Ascending aorta (tissue), 2 donors: ENCODE measurements at regions of chr3 and their contacts with region 1.

Region 1: DNA sequence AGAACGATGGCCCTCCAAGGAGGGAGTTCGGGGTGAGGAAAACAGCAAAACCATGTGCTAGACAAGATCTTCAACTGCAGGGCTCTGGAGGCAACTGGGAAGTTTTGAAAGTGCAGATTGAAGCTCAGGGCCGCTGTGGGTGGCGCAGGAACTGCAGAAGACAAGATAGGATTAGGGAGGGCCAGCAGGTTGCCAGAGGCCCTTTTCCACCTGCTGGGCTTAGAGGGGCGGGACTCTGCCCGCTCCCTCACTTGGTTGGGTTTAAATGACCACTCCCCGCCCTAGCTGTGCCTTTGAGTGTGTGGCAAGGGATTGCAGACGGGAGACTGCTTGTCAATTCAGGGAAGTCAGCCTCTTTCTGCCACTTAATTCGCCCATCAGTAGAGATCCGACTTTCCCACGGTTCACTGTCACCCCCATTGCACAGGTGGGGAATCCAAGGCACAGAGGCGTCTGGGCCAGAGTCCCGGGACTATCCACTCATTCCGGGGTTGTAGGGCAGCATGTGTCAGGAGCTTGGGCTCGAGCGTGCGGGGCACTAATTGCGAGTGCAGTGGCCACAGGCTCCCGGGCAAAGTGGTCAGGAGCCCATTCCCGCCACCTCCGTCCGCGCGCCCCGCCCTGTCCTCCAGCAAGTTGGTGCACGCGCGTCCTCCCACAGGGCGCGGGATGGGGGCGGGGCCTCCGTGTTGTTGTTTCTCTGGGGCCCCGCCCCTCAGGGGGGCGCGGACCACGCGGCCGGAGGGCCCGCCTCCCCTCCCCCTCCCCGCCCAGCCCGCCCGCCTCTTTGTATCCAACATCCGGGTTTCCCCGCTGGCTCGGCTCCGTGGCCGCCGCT is at the start of gene ACVR2B:
- DNase-seq: peak; percentile 46 to 92
- H3K4me3 ChIP-seq: peak within 1 kb of the TSS; percentile 88 to 99
- H3K27ac ChIP-seq: peak within 1 kb of the TSS; percentile 45 to 61
- H3K4me1 ChIP-seq: peaks cover 0 to 9% of the 10 kb centered on the region in 2 donors
- H3K27me3 ChIP-seq: no peaks in the 10 kb centered on the region
- CTCF ChIP-seq: no peak
- total RNA-seq, gene ACVR2B: 15.2 TPM

Region 2: GRCh38 chr3:38136777-38137614 is 316.3 kb before region 1 on chr3 and contains the start of gene ACAA1:
- intact Hi-C with region 1: loop called (anchors 5 kb)
- DNase-seq: peak; percentile 99 to 100
- H3K4me3 ChIP-seq: peak within 1 kb of the TSS; percentile 87 to 98
- H3K27ac ChIP-seq: peak within 1 kb of the TSS; percentile 90 to 97
- H3K4me1 ChIP-seq: peaks cover 0 to 28% of the 10 kb centered on the region in 2 donors
- H3K27me3 ChIP-seq: no peaks in the 10 kb centered on the region
- CTCF ChIP-seq: no peak
- total RNA-seq, gene ACAA1: 52.6 TPM

Region 3: GRCh38 chr3:38164966-38165680 is 288.2 kb before region 1 on chr3 and contains the start of gene OXSR1:
- intact Hi-C with region 1: loop called (anchors 10 kb)
- DNase-seq: peak; percentile 98 to 100
- H3K4me3 ChIP-seq: peak within 1 kb of the TSS; percentile 83 to 97
- H3K27ac ChIP-seq: peak within 1 kb of the TSS; percentile 94 to 98
- H3K4me1 ChIP-seq: peaks cover 0 to 24% of the 10 kb centered on the region in 2 donors
- H3K27me3 ChIP-seq: no peaks in the 10 kb centered on the region
- CTCF ChIP-seq: no peak
- total RNA-seq, gene OXSR1: 13.3 TPM

Region 4: GRCh38 chr3:38479431-38480092 is 26.3 kb after region 1 on chr3:
- intact Hi-C with region 1: loop called (anchors 2 kb)
- DNase-seq: peak in 1 of 2 donors; percentile 84
- H3K4me3 ChIP-seq: no peak overlapping the region
- H3K27ac ChIP-seq: no peak overlapping the region
- H3K4me1 ChIP-seq: no peaks in the 10 kb centered on the region
- H3K27me3 ChIP-seq: no peaks in the 10 kb centered on the region
- CTCF ChIP-seq: peak; percentile 62 to 83 (median 78)

Region 5: GRCh38 chr3:38496131-38496910 is 43.0 kb after region 1 on chr3 and contains the start of gene EXOG:
- intact Hi-C with region 1: loop called (anchors 1 kb)
- DNase-seq: peak; percentile 60 to 95
- H3K4me3 ChIP-seq: peak within 1 kb of the TSS; percentile 86 to 88
- H3K27ac ChIP-seq: peak within 1 kb of the TSS; percentile 75 to 79
- H3K4me1 ChIP-seq: peaks cover 0 to 4% of the 10 kb centered on the region in 2 donors
- H3K27me3 ChIP-seq: no peaks in the 10 kb centered on the region
- CTCF ChIP-seq: peak; percentile 72 to 91 (median 89)
- total RNA-seq, gene EXOG: 11.2 TPM

Region 6: GRCh38 chr3:39051647-39052561 is 598.6 kb after region 1 on chr3 and contains the starts of genes SCN11A and WDR48:
- intact Hi-C with region 1: loop called (anchors 5 kb)
- DNase-seq: peak; percentile 80 to 97
- H3K4me3 ChIP-seq: peak within 1 kb of the TSS; percentile 92 to 96
- H3K27ac ChIP-seq: peak within 1 kb of the TSS; percentile 86 to 90
- H3K4me1 ChIP-seq: peaks cover 0 to 5% of the 10 kb centered on the region in 2 donors
- H3K27me3 ChIP-seq: no peaks in the 10 kb centered on the region
- CTCF ChIP-seq: no peak
- total RNA-seq, gene SCN11A: not detected
- total RNA-seq, gene WDR48: 81.0 TPM

Region 7: DNA sequence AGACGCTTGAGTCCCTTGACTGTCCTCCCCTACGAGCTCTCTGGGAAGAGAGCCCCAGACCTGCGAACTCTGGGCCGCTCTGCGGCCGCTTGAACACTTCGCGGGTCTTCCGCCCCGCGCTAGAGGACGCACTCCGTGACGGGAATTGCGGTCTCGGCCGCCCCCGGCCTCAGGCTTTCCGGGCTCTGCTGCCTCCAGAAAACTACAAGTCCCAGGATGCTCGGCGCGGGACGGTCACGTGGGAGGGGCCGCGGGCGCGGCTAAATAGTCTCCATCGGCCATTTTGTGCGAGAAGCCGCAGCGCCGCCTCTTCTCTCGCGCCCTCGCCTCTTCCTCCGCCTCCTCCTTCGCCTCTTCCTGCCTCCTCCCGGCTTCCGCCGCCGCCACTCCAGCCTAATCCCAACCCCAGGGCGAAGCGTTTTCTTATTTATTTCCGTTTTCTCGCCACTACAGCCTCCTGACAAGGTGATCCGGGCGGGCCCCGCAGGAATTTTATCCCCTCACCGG is 1856.2 kb after region 1 on chr3 and contains the start of gene EIF1B:
- intact Hi-C with region 1: loop called (anchors 5 kb)
- DNase-seq: peak; percentile 92 to 99
- H3K4me3 ChIP-seq: peak within 1 kb of the TSS; percentile 74
- H3K27ac ChIP-seq: peak within 1 kb of the TSS; percentile 84 to 97
- H3K4me1 ChIP-seq: peaks cover 4 to 19% of the 10 kb centered on the region in 2 donors
- H3K27me3 ChIP-seq: no peaks in the 10 kb centered on the region
- CTCF ChIP-seq: peak; percentile 79 to 89 (median 88)
- total RNA-seq, gene EIF1B: 21.7 TPM